Psoas muscle (tissue), 8 donors: ENCODE measurements at regions of chr7 and their contacts with region 1.

Region 1: GRCh38 chr7:1651897-1652296 is 18.2 kb upstream of the ELFN1 start:
- DNase-seq: no peak
- ATAC-seq: no peak
- H3K4me3 ChIP-seq: no peak overlapping the region
- H3K27ac ChIP-seq: no peak overlapping the region
- H3K4me1 ChIP-seq: peaks cover 11% of the 10 kb centered on the region
- H3K27me3 ChIP-seq: peaks cover 0 to 18% (median 0%) of the 10 kb centered on the region in 3 donors
- CTCF ChIP-seq: no peak

Region 2: DNA sequence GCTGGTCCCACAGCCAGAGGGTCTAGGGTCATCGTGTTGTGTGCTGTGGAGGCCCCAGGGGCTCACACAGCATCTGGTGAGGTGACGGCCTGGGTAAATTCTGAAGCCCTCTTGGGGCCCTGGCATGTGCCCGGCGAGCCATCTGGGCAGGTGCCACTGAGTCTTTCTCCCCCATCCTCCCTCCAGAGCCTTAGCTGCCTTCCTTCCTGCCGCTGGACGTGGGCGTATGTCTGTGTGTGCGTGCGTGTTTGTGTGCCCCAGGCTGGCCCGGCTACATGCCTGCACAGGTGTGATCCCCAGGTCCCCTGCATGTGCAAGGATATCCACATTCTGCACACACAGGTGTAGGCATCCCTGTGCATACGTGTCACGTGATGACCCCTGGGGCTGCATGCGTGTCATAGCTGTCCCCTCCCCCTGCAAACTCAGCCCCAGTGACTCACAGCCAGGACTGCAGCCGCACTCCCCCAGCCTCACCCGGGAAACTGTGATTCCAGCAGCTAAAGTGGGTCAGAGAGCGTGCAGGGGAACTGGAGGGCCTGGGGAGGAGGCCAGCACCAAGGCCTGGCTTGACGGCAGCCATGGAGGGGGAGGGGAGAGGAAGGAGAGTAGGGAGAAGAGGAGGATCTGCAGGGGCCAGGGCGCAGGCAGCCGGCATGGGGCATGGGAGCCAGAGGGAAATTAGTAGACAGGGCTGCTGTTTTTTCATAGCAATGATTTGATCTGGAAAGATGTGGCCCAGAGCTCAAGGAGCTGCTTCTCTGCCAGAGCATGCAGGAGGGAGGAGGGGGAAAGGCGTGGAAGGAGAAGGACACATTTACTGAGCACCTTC is 64.6 kb after region 1 on chr7:
- intact Hi-C with region 1: loop called in 1 of 2 experiments (anchors 1 kb)
- DNase-seq: no peak
- ATAC-seq: no peak
- H3K4me3 ChIP-seq: no peak overlapping the region
- H3K27ac ChIP-seq: no peak overlapping the region
- H3K4me1 ChIP-seq: peaks cover 6% of the 10 kb centered on the region
- H3K27me3 ChIP-seq: no peaks in the 10 kb centered on the region
- CTCF ChIP-seq: no peak